B cell (primary cell): ENCODE measurements at regions of chr6 and their contacts with region 1.

Region 1: GRCh38 chr6:129936329-129937165 is 75.4 kb upstream of the TMEM244 start:
- DNase-seq: peak; percentile 66
- ATAC-seq: no peak
- H3K4me3 ChIP-seq: no peak overlapping the region
- H3K4me3 Mint-ChIP-seq: peak overlapping the region; percentile 62
- H3K27ac ChIP-seq: no peak overlapping the region
- H3K27ac Mint-ChIP-seq: no peak overlapping the region
- H3K4me1 ChIP-seq: peaks cover 0 to 3% of the 10 kb centered on the region in 2 donors
- H3K4me1 Mint-ChIP-seq: peaks cover 3% of the 10 kb centered on the region
- H3K27me3 ChIP-seq: peaks cover 0 to 7% (median 3%) of the 10 kb centered on the region in 4 experiments
- H3K27me3 Mint-ChIP-seq: peaks cover 19% of the 10 kb centered on the region
- CTCF ChIP-seq: peak; percentile 86

Region 2: GRCh38 chr6:129774697-129775447 is 161.7 kb before region 1 on chr6:
- CTCF ChIA-PET with region 1: interaction called, 3 read pairs
- POLR2A ChIA-PET with region 1: no interaction called
- intact Hi-C with region 1: loop called (anchors 10 kb)
- DNase-seq: peak; percentile 43
- ATAC-seq: peak; percentile 49
- H3K4me3 ChIP-seq: no peak overlapping the region
- H3K4me3 Mint-ChIP-seq: no peak overlapping the region
- H3K27ac ChIP-seq: no peak overlapping the region
- H3K27ac Mint-ChIP-seq: no peak overlapping the region
- H3K4me1 ChIP-seq: no peaks in the 10 kb centered on the region
- H3K4me1 Mint-ChIP-seq: peaks cover 3% of the 10 kb centered on the region
- H3K27me3 ChIP-seq: no peaks in the 10 kb centered on the region
- H3K27me3 Mint-ChIP-seq: peaks cover 19% of the 10 kb centered on the region
- CTCF ChIP-seq: peak; percentile 72

Region 3: GRCh38 chr6:129893640-129894039 is 42.9 kb before region 1 on chr6:
- CTCF ChIA-PET with region 1: interaction called, 6 read pairs
- POLR2A ChIA-PET with region 1: no interaction called
- intact Hi-C with region 1: loop called (anchors 5 kb)
- DNase-seq: peak; percentile 28
- ATAC-seq: no peak
- H3K4me3 ChIP-seq: no peak overlapping the region
- H3K4me3 Mint-ChIP-seq: no peak overlapping the region
- H3K27ac ChIP-seq: no peak overlapping the region
- H3K27ac Mint-ChIP-seq: no peak overlapping the region
- H3K4me1 ChIP-seq: peaks cover 4 to 8% of the 10 kb centered on the region in 2 donors
- H3K4me1 Mint-ChIP-seq: peaks cover 22% of the 10 kb centered on the region
- H3K27me3 ChIP-seq: no peaks in the 10 kb centered on the region
- H3K27me3 Mint-ChIP-seq: no peaks in the 10 kb centered on the region
- CTCF ChIP-seq: peak; percentile 65